ENCODE measurements at regions of chr21 and their contacts with region 1.

Region 1: DNA sequence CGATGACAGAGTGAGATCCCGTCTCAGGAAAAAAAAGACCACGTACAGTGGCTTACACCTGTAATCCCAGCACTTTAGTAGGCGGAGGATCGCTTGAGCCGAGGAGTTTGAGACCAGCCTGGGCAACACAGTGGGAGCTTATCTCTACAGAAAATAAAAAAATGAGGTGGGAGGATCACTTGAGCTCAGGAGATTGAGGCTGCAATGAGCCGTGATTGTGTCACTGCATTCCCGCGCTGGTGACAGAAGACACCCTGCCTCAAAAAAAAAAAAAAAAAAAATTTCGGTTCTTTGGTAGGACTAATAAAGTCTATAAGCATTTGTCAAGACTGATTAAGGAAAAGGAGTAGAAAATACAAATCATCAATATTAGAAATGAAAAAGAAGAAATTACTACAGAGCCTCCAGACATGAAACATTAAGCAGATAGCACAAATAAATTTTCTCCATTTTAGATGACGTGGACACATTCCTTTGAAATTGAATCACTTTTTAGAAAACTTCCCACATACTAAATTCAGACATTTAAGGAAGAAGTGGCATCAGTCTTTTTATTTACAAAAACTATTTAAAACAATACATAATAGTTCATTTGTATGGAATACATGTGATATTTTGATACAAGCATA is 30.4 kb downstream of the MORC3 start:
- DNase-seq: no peak
- ATAC-seq: no peak
- H3K4me3 ChIP-seq: no peak overlapping the region
- H3K27ac ChIP-seq: no peak overlapping the region
- H3K4me1 ChIP-seq: no peaks in the 10 kb centered on the region
- H3K27me3 ChIP-seq: no peaks in the 10 kb centered on the region
- CTCF ChIP-seq: no peak

Region 2: GRCh38 chr21:36385233-36386030 is 35.0 kb after region 1 on chr21 and contains the start of gene CHAF1B:
- CTCF ChIA-PET with region 1: no interaction called
- POLR2A ChIA-PET with region 1: interaction called, 10 read pairs
- in situ Hi-C with region 1: no loop called
- intact Hi-C with region 1: no loop called
- DNase-seq: peak; percentile 7
- ATAC-seq: peak; percentile 98
- H3K4me3 ChIP-seq: peak within 1 kb of the TSS; percentile 58 to 72
- H3K27ac ChIP-seq: peak within 1 kb of the TSS; percentile 78
- H3K4me1 ChIP-seq: no peaks in the 10 kb centered on the region; the same call in 1 of the 2 replicates
- H3K27me3 ChIP-seq: no peaks in the 10 kb centered on the region
- CTCF ChIP-seq: no peak
- total RNA-seq, gene CHAF1B: 18.4 TPM

Region 3: DNA sequence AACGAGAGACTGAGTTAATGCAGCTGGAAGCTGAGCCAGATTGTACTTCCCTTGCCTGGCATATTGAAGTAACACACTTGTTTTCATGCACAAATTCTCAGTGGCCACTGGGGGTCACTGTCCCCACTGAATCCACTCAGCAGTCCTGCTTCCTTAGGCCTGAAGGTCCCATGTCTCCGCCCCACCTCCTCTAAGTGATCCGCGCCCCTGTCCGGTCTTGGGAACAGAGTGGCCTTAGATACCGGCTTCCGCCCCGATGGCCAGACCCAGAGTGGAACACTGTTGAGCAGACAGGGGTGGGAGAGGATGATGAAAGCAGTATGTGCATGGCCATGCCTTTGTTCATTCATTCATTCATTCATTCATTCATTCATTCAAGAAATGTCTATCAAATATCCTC is 69.6 kb after region 1 on chr21:
- CTCF ChIA-PET with region 1: no interaction called
- POLR2A ChIA-PET with region 1: no interaction called
- in situ Hi-C with region 1: no loop called
- intact Hi-C with region 1: no loop called
- DNase-seq: no peak
- ATAC-seq: peak; percentile 94
- H3K4me3 ChIP-seq: no peak overlapping the region
- H3K27ac ChIP-seq: no peak overlapping the region
- H3K4me1 ChIP-seq: no peaks in the 10 kb centered on the region
- H3K27me3 ChIP-seq: no peaks in the 10 kb centered on the region
- CTCF ChIP-seq: peak; percentile 80